ENCODE measurements at regions of chr4 and their contacts with region 1.

Region 1: GRCh38 chr4:83252782-83253405 is 31.7 kb downstream of the COQ2 start:
- DNase-seq: peak; percentile 51 to 90
- ATAC-seq: peak; percentile 85 to 95 (median 95)
- H3K4me3 ChIP-seq: no peak overlapping the region
- H3K4me3 Mint-ChIP-seq: peak overlapping the region; percentile 23
- H3K27ac ChIP-seq: peak overlapping the region; percentile 22
- H3K27ac Mint-ChIP-seq: peak overlapping the region; percentile 76 to 82
- H3K4me1 ChIP-seq: peaks cover 25% of the 10 kb centered on the region
- H3K4me1 Mint-ChIP-seq: peaks cover 39 to 42% of the 10 kb centered on the region in 2 donors
- H3K27me3 ChIP-seq: no peaks in the 10 kb centered on the region
- H3K27me3 Mint-ChIP-seq: no peaks in the 10 kb centered on the region
- CTCF ChIP-seq: peak; percentile 84

Region 2: DNA sequence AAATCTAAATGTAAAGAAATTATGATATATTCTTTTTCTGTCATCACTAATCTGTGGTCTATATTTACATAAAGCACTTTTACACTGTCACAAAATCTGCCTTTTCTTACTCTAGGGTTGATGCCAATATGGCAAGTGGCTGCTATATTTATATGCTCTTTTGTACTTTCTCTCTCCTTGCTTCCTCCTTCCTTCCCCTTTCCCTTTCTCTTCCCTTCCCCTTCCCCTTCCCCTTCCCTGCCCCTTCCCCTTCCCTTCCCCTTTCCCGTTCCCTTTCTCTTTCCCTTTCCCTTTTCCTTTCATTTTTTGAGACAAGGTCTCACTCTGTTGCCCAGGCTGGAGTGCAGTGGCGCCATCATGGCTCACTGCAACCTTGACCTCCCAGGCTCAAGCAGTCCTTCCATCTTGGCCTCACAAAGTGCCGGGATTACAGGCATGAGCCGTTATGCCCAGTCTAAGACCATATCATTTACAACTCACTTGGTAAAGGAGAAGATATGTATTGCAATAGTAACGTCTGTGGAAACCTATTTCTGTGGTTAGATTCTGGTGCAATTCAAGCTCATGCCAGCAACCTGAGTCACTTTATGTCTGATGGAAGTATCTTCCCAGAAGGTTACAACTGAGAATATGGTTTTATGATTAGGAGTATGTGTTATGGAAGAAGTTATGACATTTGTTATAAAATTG is 124.5 kb before region 1 on chr4:
- intact Hi-C with region 1: loop called (anchors 5 kb)
- DNase-seq: no peak
- ATAC-seq: peak in 1 of 3 donors; percentile 58
- H3K4me3 ChIP-seq: no peak overlapping the region
- H3K4me3 Mint-ChIP-seq: no peak overlapping the region
- H3K27ac ChIP-seq: no peak overlapping the region
- H3K27ac Mint-ChIP-seq: peak overlapping the region; percentile 19 to 32
- H3K4me1 ChIP-seq: peaks cover 25% of the 10 kb centered on the region
- H3K4me1 Mint-ChIP-seq: peaks cover 24 to 33% of the 10 kb centered on the region in 2 donors
- H3K27me3 ChIP-seq: no peaks in the 10 kb centered on the region
- H3K27me3 Mint-ChIP-seq: no peaks in the 10 kb centered on the region
- CTCF ChIP-seq: no peak

Measured in natural killer cell (primary cell).